Kidney (tissue), 22 donors: ENCODE measurements at regions of chr2 and their contacts with region 1.

Region 1: GRCh38 chr2:100394111-100394641 is 23.3 kb downstream of the CHST10 start:
- DNase-seq: peak in 4 of 5 donors; percentile 64 to 80 (median 72)
- H3K4me3 ChIP-seq: no peak overlapping the region
- H3K27ac ChIP-seq: no peak overlapping the region
- H3K4me1 ChIP-seq: no peaks in the 10 kb centered on the region
- H3K27me3 ChIP-seq: no peaks in the 10 kb centered on the region
- CTCF ChIP-seq: no peak

Region 2: GRCh38 chr2:100161945-100162620 is 232.1 kb before region 1 on chr2:
- intact Hi-C with region 1: no loop called
- DNase-seq: no peak
- H3K4me3 ChIP-seq: no peak overlapping the region
- H3K27ac ChIP-seq: no peak overlapping the region
- H3K4me1 ChIP-seq: no peaks in the 10 kb centered on the region
- H3K27me3 ChIP-seq: no peaks in the 10 kb centered on the region
- CTCF ChIP-seq: no peak

Region 3: GRCh38 chr2:100272841-100273329 is 121.3 kb before region 1 on chr2:
- intact Hi-C with region 1: loop called (anchors 10 kb)
- DNase-seq: no peak
- H3K4me3 ChIP-seq: no peak overlapping the region
- H3K27ac ChIP-seq: no peak overlapping the region
- H3K4me1 ChIP-seq: peaks cover 0 to 5% (median 0%) of the 10 kb centered on the region in 3 donors
- H3K27me3 ChIP-seq: no peaks in the 10 kb centered on the region
- CTCF ChIP-seq: no peak

Region 4: GRCh38 chr2:100554798-100555407 is 160.7 kb after region 1 on chr2:
- intact Hi-C with region 1: no loop called
- DNase-seq: peak in 1 of 5 donors; percentile 66
- H3K4me3 ChIP-seq: no peak overlapping the region
- H3K27ac ChIP-seq: no peak overlapping the region
- H3K4me1 ChIP-seq: no peaks in the 10 kb centered on the region
- H3K27me3 ChIP-seq: no peaks in the 10 kb centered on the region
- CTCF ChIP-seq: no peak

Region 5: DNA sequence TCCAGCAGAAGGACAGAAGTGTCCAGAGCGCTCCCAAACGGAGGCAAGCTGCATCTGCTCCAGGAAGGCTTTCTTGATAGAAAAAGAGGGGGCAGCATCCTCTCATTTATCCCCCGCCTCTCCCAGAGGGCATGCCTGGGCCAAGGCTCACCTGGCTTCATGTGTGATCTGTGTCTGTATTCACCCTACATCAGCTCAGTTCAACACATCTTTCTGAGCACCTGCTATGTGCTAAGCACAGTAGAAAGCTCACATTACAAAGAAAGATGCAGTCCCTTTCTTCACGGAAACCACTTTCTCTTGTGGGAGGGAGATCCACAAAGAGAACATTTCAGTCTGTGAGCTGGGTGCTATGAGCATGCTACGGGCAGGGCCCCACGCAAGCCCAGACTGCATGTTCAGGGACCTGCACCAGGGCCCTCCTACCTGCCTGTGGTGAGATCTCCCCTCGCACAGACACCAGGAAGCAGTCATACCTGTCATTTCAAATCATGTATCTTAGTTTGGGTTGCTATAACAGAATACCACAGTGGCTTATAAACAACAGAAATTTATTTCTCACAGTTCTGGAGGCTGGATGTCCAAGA is 259.4 kb after region 1 on chr2:
- intact Hi-C with region 1: no loop called
- DNase-seq: peak in 1 of 5 donors; percentile 13
- H3K4me3 ChIP-seq: no peak overlapping the region
- H3K27ac ChIP-seq: no peak overlapping the region
- H3K4me1 ChIP-seq: no peaks in the 10 kb centered on the region
- H3K27me3 ChIP-seq: no peaks in the 10 kb centered on the region
- CTCF ChIP-seq: no peak

Region 6: GRCh38 chr2:100812116-100812515 is 417.9 kb after region 1 on chr2:
- intact Hi-C with region 1: no loop called
- DNase-seq: peak in 4 of 5 donors; percentile 69 to 88 (median 82)
- H3K4me3 ChIP-seq: no peak overlapping the region
- H3K27ac ChIP-seq: no peak overlapping the region
- H3K4me1 ChIP-seq: no peaks in the 10 kb centered on the region
- H3K27me3 ChIP-seq: no peaks in the 10 kb centered on the region
- CTCF ChIP-seq: no peak